ENCODE measurements at regions of chr5 and their contacts with region 1.

Region 1: GRCh38 chr5:81851481-81852178 is 100.7 kb upstream of the SSBP2 start:
- DNase-seq: peak; percentile 97
- ATAC-seq: peak; percentile 98
- H3K4me3 ChIP-seq: peak overlapping the region; percentile 57
- H3K27ac ChIP-seq: peak overlapping the region; percentile 95
- H3K4me1 ChIP-seq: peaks cover 28% of the 10 kb centered on the region
- H3K27me3 ChIP-seq: no peaks in the 10 kb centered on the region
- CTCF ChIP-seq: no peak

Region 2: GRCh38 chr5:81751009-81751835 is 100.4 kb before region 1 on chr5 and contains the start of gene SSBP2:
- intact Hi-C with region 1: loop called (anchors 5 kb)
- DNase-seq: peak; percentile 98
- ATAC-seq: peak; percentile 96 to 97
- H3K4me3 ChIP-seq: peak within 1 kb of the TSS; percentile 70
- H3K27ac ChIP-seq: peak within 1 kb of the TSS; percentile 97
- H3K4me1 ChIP-seq: peaks cover 41% of the 10 kb centered on the region
- H3K27me3 ChIP-seq: no peaks in the 10 kb centered on the region
- CTCF ChIP-seq: no peak
- total RNA-seq, gene SSBP2: 41.1 TPM

Region 3: GRCh38 chr5:81787474-81788242 is 64.0 kb before region 1 on chr5:
- intact Hi-C with region 1: loop called (anchors 5 kb)
- DNase-seq: no peak
- ATAC-seq: peak; percentile 37 to 68
- H3K4me3 ChIP-seq: no peak overlapping the region
- H3K27ac ChIP-seq: no peak overlapping the region
- H3K4me1 ChIP-seq: peaks cover 21% of the 10 kb centered on the region
- H3K27me3 ChIP-seq: no peaks in the 10 kb centered on the region
- CTCF ChIP-seq: no peak

Region 4: DNA sequence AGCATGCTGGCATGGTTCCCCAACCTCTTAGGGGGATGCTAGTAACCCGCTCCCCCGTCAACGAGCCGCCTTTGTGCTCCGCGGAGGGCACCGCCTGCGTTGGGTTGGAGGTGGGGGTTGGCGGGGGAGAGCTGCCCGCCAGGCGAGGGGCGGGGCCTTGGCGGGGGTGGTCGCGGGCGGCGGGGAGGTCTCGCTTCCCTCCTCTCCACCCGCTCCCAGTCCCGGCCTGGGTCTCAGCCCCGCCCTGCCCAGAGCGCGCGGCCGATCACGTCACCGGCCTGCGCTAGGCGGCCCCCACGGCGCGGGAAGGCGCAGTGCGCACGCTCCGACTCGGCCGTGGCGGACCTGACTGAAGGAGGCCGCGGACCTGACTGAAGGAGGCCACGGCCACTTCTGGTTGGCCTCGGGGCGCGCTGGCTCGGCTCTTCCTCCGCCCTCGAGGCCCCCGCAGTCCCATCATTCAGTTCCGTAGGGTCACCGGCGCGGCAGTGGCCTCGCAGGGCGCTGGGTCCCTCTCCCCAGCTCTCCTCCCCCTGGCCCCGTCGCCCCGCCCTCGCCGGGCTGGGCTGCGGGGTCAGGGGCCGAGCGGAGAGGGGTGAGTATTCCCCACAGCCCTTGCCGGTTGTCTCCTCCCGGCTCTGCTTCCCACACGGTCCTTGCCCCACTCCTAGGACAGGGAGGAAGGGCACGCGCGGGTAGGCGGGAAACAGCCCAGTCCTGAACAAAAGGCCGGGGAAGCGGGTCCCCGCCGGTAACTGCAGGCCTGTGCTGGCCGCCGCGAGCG is 120.3 kb after region 1 on chr5 and contains the start of gene ATG10:
- intact Hi-C with region 1: loop called (anchors 10 kb)
- DNase-seq: peak; percentile 93
- ATAC-seq: peak; percentile 99
- H3K4me3 ChIP-seq: peak within 1 kb of the TSS; percentile 74
- H3K27ac ChIP-seq: peak within 1 kb of the TSS; percentile 99
- H3K4me1 ChIP-seq: peaks cover 5% of the 10 kb centered on the region
- H3K27me3 ChIP-seq: no peaks in the 10 kb centered on the region
- CTCF ChIP-seq: no peak
- total RNA-seq, gene ATG10: 5.4 TPM